ENCODE measurements at regions of chr6 and their contacts with region 1.

Region 1: GRCh38 chr6:75893058-75893775 is 144.2 kb downstream of the MYO6 start:
- DNase-seq: peak; percentile 19
- ATAC-seq: peak; percentile 85
- H3K4me3 ChIP-seq: no peak overlapping the region
- H3K27ac ChIP-seq: no peak overlapping the region
- H3K4me1 ChIP-seq: no peaks in the 10 kb centered on the region
- H3K27me3 ChIP-seq: no peaks in the 10 kb centered on the region
- CTCF ChIP-seq: peak; percentile 57 to 65 (median 65)
- EP300 ChIP-seq: no peak
- POLR2A ChIP-seq: no peak
- RAD21 ChIP-seq: peak; percentile 81

Region 2: GRCh38 chr6:75830959-75831885 is 62.0 kb before region 1 on chr6:
- CTCF ChIA-PET with region 1: interaction called, 10 read pairs
- POLR2A ChIA-PET with region 1: no interaction called
- RAD21 ChIA-PET with region 1: interaction called, 3 read pairs
- SMC1A ChIA-PET with region 1: no interaction called
- in situ Hi-C with region 1: no loop called
- intact Hi-C with region 1: no loop called
- DNase-seq: peak; percentile 30
- ATAC-seq: peak; percentile 94
- H3K4me3 ChIP-seq: no peak overlapping the region
- H3K27ac ChIP-seq: no peak overlapping the region
- H3K4me1 ChIP-seq: no peaks in the 10 kb centered on the region
- H3K27me3 ChIP-seq: no peaks in the 10 kb centered on the region
- CTCF ChIP-seq: no peak
- EP300 ChIP-seq: peak in 1 of 2 experiments; percentile 29; a peak in 1 of 4 replicates
- POLR2A ChIP-seq: no peak
- RAD21 ChIP-seq: 0 out of 2 replicates have a peak, but pooled peaks have one; percentile 7

Region 3: DNA sequence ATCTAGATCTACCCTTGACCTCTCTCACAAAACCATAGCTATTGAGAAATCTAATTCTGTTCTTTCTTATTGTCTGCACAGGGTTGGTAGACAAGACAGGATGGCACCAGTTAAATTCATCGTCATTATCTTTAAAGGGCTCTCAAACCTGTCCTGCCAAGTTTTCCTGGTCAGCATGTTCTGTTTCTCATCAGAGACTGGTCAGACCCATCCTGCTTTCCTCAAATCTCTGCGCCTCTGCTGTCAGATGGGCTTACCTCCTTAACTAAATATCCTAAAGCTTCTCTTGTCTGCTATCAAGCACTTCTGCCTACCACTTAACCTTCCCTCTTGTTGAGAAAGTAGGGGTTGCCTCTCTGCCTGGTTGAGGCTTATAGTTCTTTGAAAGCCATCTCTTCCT is 19.0 kb before region 1 on chr6:
- CTCF ChIA-PET with region 1: interaction called, 157 read pairs
- POLR2A ChIA-PET with region 1: interaction called, 3 read pairs
- RAD21 ChIA-PET with region 1: interaction called, 12 read pairs
- SMC1A ChIA-PET with region 1: interaction called, 16 read pairs
- in situ Hi-C with region 1: no loop called
- intact Hi-C with region 1: no loop called
- DNase-seq: no peak
- ATAC-seq: no peak
- H3K4me3 ChIP-seq: no peak overlapping the region
- H3K27ac ChIP-seq: no peak overlapping the region
- H3K4me1 ChIP-seq: no peaks in the 10 kb centered on the region
- H3K27me3 ChIP-seq: no peaks in the 10 kb centered on the region
- CTCF ChIP-seq: no peak
- EP300 ChIP-seq: no peak
- POLR2A ChIP-seq: no peak
- RAD21 ChIP-seq: no peak

Region 4: GRCh38 chr6:75913040-75913439 is 19.8 kb after region 1 on chr6:
- CTCF ChIA-PET with region 1: interaction called, 105 read pairs
- POLR2A ChIA-PET with region 1: no interaction called
- RAD21 ChIA-PET with region 1: interaction called, 5 read pairs
- SMC1A ChIA-PET with region 1: interaction called, 24 read pairs
- in situ Hi-C with region 1: no loop called
- intact Hi-C with region 1: no loop called
- DNase-seq: no peak
- ATAC-seq: no peak
- H3K4me3 ChIP-seq: no peak overlapping the region
- H3K27ac ChIP-seq: no peak overlapping the region
- H3K4me1 ChIP-seq: no peaks in the 10 kb centered on the region
- H3K27me3 ChIP-seq: no peaks in the 10 kb centered on the region
- CTCF ChIP-seq: no peak
- EP300 ChIP-seq: no peak
- POLR2A ChIP-seq: no peak
- RAD21 ChIP-seq: no peak

Region 5: GRCh38 chr6:75940564-75940963 is 47.3 kb after region 1 on chr6:
- CTCF ChIA-PET with region 1: interaction called, 75 read pairs
- POLR2A ChIA-PET with region 1: no interaction called
- RAD21 ChIA-PET with region 1: interaction called, 4 read pairs
- SMC1A ChIA-PET with region 1: interaction called, 4 read pairs
- in situ Hi-C with region 1: no loop called
- intact Hi-C with region 1: no loop called
- DNase-seq: no peak
- ATAC-seq: no peak
- H3K4me3 ChIP-seq: no peak overlapping the region
- H3K27ac ChIP-seq: no peak overlapping the region
- H3K4me1 ChIP-seq: no peaks in the 10 kb centered on the region
- H3K27me3 ChIP-seq: no peaks in the 10 kb centered on the region
- CTCF ChIP-seq: no peak
- EP300 ChIP-seq: no peak
- POLR2A ChIP-seq: no peak
- RAD21 ChIP-seq: no peak

Region 6: GRCh38 chr6:76861403-76861802 is 968.2 kb after region 1 on chr6:
- CTCF ChIA-PET with region 1: interaction called, 29 read pairs
- POLR2A ChIA-PET with region 1: no interaction called
- RAD21 ChIA-PET with region 1: interaction called, 14 read pairs
- SMC1A ChIA-PET with region 1: interaction called, 3 read pairs
- in situ Hi-C with region 1: no loop called
- intact Hi-C with region 1: no loop called
- DNase-seq: no peak
- ATAC-seq: peak; percentile 99
- H3K4me3 ChIP-seq: no peak overlapping the region
- H3K27ac ChIP-seq: no peak overlapping the region
- H3K4me1 ChIP-seq: no peaks in the 10 kb centered on the region
- H3K27me3 ChIP-seq: no peaks in the 10 kb centered on the region
- CTCF ChIP-seq: peak; percentile 33 to 53 (median 43); a peak in 4 of 6 replicates
- EP300 ChIP-seq: no peak
- POLR2A ChIP-seq: no peak
- RAD21 ChIP-seq: peak; percentile 38